ENCODE measurements at regions of chr16 and their contacts with region 1.

Region 1: DNA sequence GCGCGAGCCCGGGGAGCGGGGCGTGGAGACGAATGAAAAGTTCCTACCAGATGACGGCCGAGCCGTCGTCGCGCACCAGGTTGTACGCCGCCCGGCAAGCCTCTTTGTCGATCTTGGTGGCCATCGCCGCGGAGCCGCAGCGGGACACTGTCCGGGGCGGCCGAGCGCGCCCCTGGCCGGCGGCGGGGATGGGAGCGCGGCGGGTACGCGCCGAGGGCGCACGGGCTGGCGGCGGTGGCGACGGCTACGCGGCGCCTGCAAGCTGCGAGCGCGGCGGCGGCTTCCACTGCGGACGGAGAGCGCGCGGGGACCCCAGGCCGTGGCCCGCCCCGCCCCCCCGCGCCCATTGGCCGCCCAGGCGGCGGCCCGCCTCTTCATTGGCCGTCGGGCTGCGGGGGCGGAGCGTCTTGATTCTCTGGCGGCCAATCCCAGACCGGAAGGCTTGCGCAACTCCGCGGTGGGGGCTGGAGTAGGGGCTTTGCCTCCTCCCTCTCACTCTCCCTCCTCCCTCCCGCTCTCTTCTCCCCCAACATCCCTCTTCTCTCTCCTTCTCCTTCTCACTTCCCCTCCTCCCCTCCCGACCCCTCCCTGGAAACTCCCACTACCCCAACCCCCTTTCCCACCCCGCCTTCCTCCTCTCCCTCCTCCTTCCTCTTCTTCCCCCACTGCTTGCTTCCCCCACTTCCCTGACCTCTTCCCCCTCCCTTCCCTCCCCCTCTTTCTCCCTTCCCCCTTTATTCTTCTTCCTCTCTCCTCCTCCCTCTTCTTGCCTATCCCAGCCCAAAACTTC is at the start of gene COTL1:
- DNase-seq: peak; percentile 89 to 96 (median 91)
- H3K4me3 ChIP-seq: peak within 1 kb of the TSS; percentile 86
- H3K4me3 Mint-ChIP-seq: peak within 1 kb of the TSS; percentile 93 to 98 (median 96)
- H3K27ac ChIP-seq: peak within 1 kb of the TSS; percentile 81
- H3K27ac Mint-ChIP-seq: peak within 1 kb of the TSS; percentile 85 to 97 (median 92)
- H3K4me1 ChIP-seq: peaks cover 42% of the 10 kb centered on the region
- H3K4me1 Mint-ChIP-seq: peaks cover 45 to 54% (median 52%) of the 10 kb centered on the region in 3 donors
- H3K27me3 ChIP-seq: no peaks in the 10 kb centered on the region
- H3K27me3 Mint-ChIP-seq: peaks cover 0 to 3% of the 10 kb centered on the region in 2 donors
- total RNA-seq, gene COTL1: 373 to 388 TPM

Region 2: DNA sequence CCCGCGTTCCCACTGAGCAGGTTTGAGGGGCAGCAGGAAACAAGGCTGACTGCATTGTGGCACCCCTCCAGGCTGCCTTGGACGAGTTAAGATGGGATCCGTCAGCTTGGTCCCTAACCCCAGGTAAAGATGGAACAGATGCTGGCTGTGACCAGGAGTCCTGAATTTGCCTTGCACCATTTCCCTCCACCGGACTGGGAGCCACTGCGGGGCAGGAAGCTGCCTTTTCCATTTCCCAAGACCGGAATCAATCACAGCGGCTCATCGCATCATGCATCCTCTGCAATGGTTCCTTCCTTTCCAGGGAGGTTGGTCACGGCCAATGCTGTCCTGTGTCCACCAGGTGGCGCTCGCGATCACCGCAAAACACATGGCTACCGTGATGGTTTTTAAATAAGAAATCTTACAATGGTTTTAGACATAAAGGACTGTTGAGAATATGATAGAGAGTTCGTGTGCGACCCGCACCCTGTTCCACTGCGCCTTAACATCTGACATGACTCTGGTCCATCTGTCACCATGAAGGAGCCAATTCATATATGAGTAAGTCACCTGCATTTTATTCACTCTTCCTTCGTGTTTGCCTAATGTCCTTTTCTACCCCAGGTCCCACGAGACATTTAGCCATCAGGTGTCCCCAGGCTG is 106.7 kb before region 1 on chr16:
- CTCF ChIA-PET with region 1: interaction called, 118 read pairs
- POLR2A ChIA-PET with region 1: interaction called, 9 read pairs
- DNase-seq: peak; percentile 65 to 89 (median 81)
- H3K4me3 ChIP-seq: peak overlapping the region; percentile 4
- H3K4me3 Mint-ChIP-seq: peak overlapping the region; percentile 7 to 57 (median 16)
- H3K27ac ChIP-seq: no peak overlapping the region
- H3K27ac Mint-ChIP-seq: peak overlapping the region in 7 of 8 donors; percentile 50 to 92 (median 83)
- H3K4me1 ChIP-seq: peaks cover 85% of the 10 kb centered on the region
- H3K4me1 Mint-ChIP-seq: peaks cover 57 to 71% (median 70%) of the 10 kb centered on the region in 3 donors
- H3K27me3 ChIP-seq: no peaks in the 10 kb centered on the region
- H3K27me3 Mint-ChIP-seq: peaks cover 0 to 4% of the 10 kb centered on the region in 2 donors

Region 3: DNA sequence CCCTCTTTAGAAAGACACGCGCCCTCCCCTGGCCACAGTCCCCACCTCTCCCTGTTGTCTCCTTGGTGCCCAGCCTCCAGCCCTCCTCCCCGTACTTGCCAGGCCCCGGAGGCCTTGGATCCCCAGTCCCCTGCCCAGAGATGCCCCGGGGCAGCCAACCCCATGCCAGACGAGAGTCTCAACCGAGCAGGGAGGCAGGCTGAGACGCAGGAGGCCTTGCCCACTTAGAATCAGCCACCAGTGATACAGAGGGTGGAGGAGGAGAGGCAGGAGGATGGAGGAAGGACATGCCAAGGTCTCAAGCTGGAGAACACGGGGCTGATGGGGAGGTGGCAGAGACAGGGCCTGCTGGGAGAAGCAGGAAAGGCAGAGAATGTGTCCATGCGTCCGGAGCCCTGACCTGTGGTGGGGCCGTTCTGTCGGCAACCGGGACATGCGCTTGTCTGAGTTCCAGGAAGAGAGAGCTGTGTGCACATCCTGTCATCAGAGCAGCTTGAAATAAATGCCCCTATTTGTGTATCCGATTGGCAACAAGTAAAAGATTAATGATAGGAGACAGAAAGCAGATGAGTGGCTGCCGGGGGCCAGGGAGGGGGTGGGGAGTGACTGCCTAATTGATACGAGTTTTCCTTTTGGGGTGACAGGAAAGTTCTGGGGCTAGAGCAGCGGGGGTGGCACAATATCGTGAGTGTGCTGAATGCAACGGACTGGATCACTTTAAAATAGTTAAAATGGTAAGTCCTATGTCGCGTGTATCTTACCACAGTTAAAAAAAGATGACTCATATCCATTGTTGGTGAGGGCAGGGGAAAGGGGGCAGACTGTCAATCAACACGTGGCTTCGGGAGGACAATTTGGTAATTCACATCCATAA is 68.8 kb before region 1 on chr16:
- CTCF ChIA-PET with region 1: interaction called, 8 read pairs
- POLR2A ChIA-PET with region 1: interaction called, 24 read pairs
- DNase-seq: peak; percentile 12 to 74 (median 49)
- H3K4me3 ChIP-seq: peak overlapping the region; percentile 51
- H3K4me3 Mint-ChIP-seq: peak overlapping the region; percentile 85 to 94 (median 89)
- H3K27ac ChIP-seq: peak overlapping the region; percentile 75
- H3K27ac Mint-ChIP-seq: peak overlapping the region; percentile 95 to 100 (median 97)
- H3K4me1 ChIP-seq: peaks cover 68% of the 10 kb centered on the region
- H3K4me1 Mint-ChIP-seq: peaks cover 49 to 79% (median 61%) of the 10 kb centered on the region in 3 donors
- H3K27me3 ChIP-seq: no peaks in the 10 kb centered on the region
- H3K27me3 Mint-ChIP-seq: no peaks in the 10 kb centered on the region

Region 4: GRCh38 chr16:84599521-84600202 is 18.3 kb before region 1 on chr16:
- CTCF ChIA-PET with region 1: interaction called, 53 read pairs
- POLR2A ChIA-PET with region 1: interaction called, 82 read pairs
- DNase-seq: peak in 2 of 5 donors; percentile 58 to 79
- H3K4me3 ChIP-seq: peak overlapping the region; percentile 54
- H3K4me3 Mint-ChIP-seq: peak overlapping the region; percentile 75 to 91 (median 84)
- H3K27ac ChIP-seq: peak overlapping the region; percentile 86
- H3K27ac Mint-ChIP-seq: peak overlapping the region; percentile 92 to 100 (median 95)
- H3K4me1 ChIP-seq: peaks cover 90% of the 10 kb centered on the region
- H3K4me1 Mint-ChIP-seq: peaks cover 84 to 96% (median 95%) of the 10 kb centered on the region in 3 donors
- H3K27me3 ChIP-seq: no peaks in the 10 kb centered on the region
- H3K27me3 Mint-ChIP-seq: peaks cover 0 to 2% of the 10 kb centered on the region in 2 donors

Region 5: GRCh38 chr16:84633622-84634021 is 15.6 kb after region 1 on chr16:
- CTCF ChIA-PET with region 1: no interaction called
- POLR2A ChIA-PET with region 1: no interaction called
- DNase-seq: no peak
- H3K4me3 ChIP-seq: no peak overlapping the region
- H3K4me3 Mint-ChIP-seq: no peak overlapping the region
- H3K27ac ChIP-seq: no peak overlapping the region
- H3K27ac Mint-ChIP-seq: no peak overlapping the region
- H3K4me1 ChIP-seq: peaks cover 27% of the 10 kb centered on the region
- H3K4me1 Mint-ChIP-seq: peaks cover 15 to 28% (median 17%) of the 10 kb centered on the region in 3 donors
- H3K27me3 ChIP-seq: no peaks in the 10 kb centered on the region
- H3K27me3 Mint-ChIP-seq: peaks cover 4 to 5% of the 10 kb centered on the region in 2 donors

Region 6: DNA sequence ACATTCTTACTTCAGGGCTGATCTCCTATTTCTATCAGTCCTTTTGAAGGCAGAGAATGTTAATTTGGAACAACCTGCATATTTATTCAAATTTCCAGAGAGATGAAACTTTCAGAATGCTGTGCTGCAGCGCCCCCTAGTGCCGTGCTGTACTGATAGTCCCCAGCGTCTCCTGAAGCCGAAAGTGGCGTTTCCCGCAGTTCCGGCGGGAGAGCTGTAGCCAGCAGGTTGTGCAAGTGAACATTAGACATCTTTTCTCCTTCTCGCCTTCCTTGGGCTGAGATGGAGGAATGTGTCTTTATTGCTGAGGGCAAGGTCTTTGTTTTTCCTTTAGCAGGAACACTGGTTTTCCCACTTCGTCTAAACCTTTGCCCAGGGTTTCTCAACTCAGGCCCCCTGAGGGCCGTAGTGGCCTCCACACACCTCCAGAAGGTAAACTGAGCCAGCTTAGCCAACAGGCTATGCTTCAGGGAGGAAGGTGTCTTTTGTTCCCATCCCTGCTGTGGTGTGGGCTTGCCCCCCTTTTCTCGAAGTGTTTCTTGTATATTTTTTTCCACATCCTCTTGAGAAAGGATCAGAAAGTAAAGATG is 108.2 kb after region 1 on chr16:
- CTCF ChIA-PET with region 1: interaction called, 36 read pairs
- POLR2A ChIA-PET with region 1: no interaction called
- DNase-seq: peak; percentile 62 to 85 (median 77)
- H3K4me3 ChIP-seq: peak overlapping the region; percentile 15
- H3K4me3 Mint-ChIP-seq: peak overlapping the region in 6 of 7 donors; percentile 29 to 68 (median 62)
- H3K27ac ChIP-seq: no peak overlapping the region
- H3K27ac Mint-ChIP-seq: peak overlapping the region in 4 of 8 donors; percentile 56 to 83 (median 78)
- H3K4me1 ChIP-seq: peaks cover 31% of the 10 kb centered on the region
- H3K4me1 Mint-ChIP-seq: peaks cover 47 to 71% (median 70%) of the 10 kb centered on the region in 3 donors
- H3K27me3 ChIP-seq: no peaks in the 10 kb centered on the region
- H3K27me3 Mint-ChIP-seq: no peaks in the 10 kb centered on the region

Measured in CD8-positive, alpha-beta memory T cell (primary cell).